ENCODE measurements at regions of chr11 and their contacts with region 1.

Region 1: DNA sequence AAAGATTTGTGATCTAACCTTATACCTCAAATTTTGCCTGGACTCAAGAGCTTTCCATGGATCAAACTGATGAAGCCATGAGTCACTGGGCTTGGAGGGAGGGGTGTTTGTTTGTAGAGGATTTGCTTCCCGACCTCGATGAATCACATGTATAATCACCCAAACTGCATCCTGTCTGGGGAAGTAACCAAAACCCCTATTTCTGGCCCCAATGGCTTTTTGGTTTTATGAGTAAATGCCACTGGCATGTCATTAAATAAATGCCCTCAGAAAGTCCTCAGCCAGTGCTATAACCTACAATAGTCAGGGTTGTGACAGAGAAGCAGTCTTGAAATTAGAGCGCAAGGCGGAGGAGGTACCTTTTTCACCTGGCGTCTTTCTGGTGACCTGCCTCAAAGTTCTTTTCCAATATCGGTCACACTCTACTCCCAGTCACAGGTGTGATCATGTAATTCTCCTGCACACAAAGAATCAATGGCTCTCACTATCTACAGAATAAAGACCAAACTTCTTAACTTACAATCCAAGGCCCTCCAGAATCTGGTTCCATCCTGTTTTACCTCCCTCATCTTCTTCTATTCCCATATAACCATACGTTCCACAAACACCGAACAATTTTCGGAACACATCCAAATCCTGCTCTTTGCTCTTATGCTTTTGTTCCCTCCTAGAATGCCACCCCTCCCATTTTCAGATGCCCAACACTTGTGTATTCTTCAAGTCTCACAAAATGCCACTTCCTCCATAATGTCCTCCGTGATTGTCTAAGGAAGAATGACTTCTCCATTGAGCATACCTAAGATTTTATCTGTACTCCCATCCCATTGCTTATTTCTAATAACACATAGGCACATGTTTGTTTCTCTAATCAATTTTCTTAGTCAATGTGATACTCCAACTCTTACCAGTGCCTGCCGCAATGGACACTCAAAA is 81.3 kb upstream of the BLID start:
- DNase-seq: no peak
- ATAC-seq: peak; percentile 48

Region 2: GRCh38 chr11:122108192-122108799 is 89.0 kb before region 1 on chr11:
- intact Hi-C with region 1: loop called (anchors 10 kb)
- DNase-seq: no peak
- ATAC-seq: peak; percentile 6

Region 3: GRCh38 chr11:122137081-122137793 is 60.1 kb before region 1 on chr11:
- intact Hi-C with region 1: no loop called
- DNase-seq: no peak
- ATAC-seq: peak; percentile 90

Measured in left ventricle myocardium superior (tissue), 1 donor.